CD8-positive, alpha-beta memory T cell (primary cell): ENCODE measurements at regions of chr13 and their contacts with region 1.

Region 1: DNA sequence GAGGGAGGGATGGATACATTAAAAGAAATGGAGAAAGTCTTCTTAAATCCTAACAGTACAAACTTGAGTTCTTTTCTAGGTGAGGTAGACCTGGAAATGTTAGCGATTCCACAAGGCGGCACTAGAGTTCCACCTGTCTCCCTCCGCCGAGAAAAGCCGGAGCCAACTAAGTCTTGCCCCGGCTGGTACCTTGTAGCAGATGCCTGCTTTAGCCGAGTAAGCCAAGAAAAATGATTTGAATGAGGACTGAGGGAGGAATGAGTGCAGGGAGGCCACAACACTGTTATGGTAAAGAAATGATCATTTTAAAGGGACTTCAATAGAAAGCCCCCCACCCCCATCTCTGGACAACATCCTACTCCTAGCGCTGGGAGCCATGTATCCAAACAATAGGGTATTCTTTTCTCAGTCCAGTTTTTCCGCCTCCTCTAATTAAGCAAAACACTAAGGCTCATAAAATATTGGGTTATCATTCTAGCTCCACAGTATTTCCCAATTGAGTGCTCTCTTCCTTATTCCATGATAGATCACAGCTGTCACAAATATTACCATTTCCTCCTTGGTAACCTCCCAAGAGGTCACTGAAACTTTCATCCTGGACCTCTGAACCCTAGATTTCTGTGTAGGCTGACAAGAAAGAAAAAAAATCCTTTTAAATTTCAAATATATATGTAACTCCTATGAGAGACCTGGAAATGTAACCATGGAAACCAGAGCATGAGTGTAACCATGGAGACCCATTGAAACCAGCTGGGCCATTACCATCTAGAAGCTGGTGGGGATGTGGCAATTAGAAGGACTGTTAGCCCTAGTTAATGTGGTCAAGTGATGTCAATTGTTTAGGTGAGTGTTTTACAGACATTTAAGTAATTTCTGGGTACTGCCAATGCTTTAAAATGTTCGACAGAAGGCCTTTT is 58.3 kb downstream of the GPALPP1 start:
- DNase-seq: peak; percentile 56 to 82 (median 65)
- H3K4me3 ChIP-seq: peak overlapping the region; percentile 16
- H3K4me3 Mint-ChIP-seq: peak overlapping the region; percentile 31 to 75 (median 73)
- H3K27ac ChIP-seq: no peak overlapping the region
- H3K27ac Mint-ChIP-seq: peak overlapping the region in 2 of 8 donors; percentile 2 to 33
- H3K4me1 ChIP-seq: no peaks in the 10 kb centered on the region
- H3K4me1 Mint-ChIP-seq: peaks cover 5 to 12% (median 7%) of the 10 kb centered on the region in 3 donors
- H3K27me3 ChIP-seq: no peaks in the 10 kb centered on the region
- H3K27me3 Mint-ChIP-seq: peaks cover 2 to 12% of the 10 kb centered on the region in 2 donors

Region 2: GRCh38 chr13:44934724-44935123 is 112.9 kb before region 1 on chr13:
- CTCF ChIA-PET with region 1: no interaction called
- POLR2A ChIA-PET with region 1: no interaction called
- DNase-seq: no peak
- H3K4me3 ChIP-seq: no peak overlapping the region
- H3K4me3 Mint-ChIP-seq: no peak overlapping the region
- H3K27ac ChIP-seq: no peak overlapping the region
- H3K27ac Mint-ChIP-seq: no peak overlapping the region
- H3K4me1 ChIP-seq: no peaks in the 10 kb centered on the region
- H3K4me1 Mint-ChIP-seq: no peaks in the 10 kb centered on the region
- H3K27me3 ChIP-seq: no peaks in the 10 kb centered on the region
- H3K27me3 Mint-ChIP-seq: peaks cover 4 to 13% of the 10 kb centered on the region in 2 donors

Region 3: DNA sequence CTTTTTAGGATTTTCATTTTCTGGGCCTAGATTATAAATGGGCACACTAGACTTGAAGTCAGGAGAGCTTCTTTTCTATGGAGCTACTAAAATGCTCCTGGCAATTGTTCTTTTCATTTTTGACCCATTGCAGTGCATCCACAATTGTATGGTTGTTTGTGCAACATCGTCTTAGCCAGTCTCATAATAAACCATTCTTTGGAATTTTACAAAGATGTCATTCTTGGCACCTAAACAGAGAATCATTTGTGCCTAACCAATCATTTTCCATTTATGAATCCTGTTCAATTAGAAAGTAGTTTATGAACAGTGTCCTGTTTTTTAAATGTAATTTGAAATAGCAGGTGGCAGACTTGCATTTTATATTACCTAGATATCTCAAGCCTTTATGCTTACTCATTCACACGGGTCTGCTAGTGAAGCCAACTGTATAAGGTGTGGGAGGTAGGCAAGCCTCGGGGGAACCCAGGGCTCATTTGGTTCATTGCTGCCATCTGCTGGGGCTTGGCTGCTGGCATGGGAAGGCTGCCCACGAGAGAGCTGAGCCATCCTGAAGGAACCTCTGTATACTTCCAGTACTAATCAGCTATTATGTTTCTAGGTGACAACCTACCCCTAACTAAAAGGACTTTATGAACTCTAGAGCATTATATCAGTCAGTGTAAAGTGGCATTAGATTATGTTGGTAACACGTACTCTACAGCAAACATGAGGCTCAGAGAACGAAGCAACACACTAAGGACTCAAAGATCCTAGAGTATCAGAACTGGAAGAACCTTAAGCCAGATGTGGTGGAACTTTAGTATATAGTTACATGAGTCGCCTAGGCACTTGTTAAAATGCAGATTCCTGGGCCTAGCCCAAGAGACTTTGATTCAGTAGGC is 233.3 kb after region 1 on chr13:
- CTCF ChIA-PET with region 1: interaction called, 12 read pairs
- POLR2A ChIA-PET with region 1: no interaction called
- DNase-seq: peak in 1 of 5 donors; percentile 9
- H3K4me3 ChIP-seq: no peak overlapping the region
- H3K4me3 Mint-ChIP-seq: no peak overlapping the region
- H3K27ac ChIP-seq: no peak overlapping the region
- H3K27ac Mint-ChIP-seq: peak overlapping the region in 3 of 8 donors; percentile 22 to 61 (median 47)
- H3K4me1 ChIP-seq: no peaks in the 10 kb centered on the region
- H3K4me1 Mint-ChIP-seq: no peaks in the 10 kb centered on the region
- H3K27me3 ChIP-seq: no peaks in the 10 kb centered on the region
- H3K27me3 Mint-ChIP-seq: no peaks in the 10 kb centered on the region

Region 4: DNA sequence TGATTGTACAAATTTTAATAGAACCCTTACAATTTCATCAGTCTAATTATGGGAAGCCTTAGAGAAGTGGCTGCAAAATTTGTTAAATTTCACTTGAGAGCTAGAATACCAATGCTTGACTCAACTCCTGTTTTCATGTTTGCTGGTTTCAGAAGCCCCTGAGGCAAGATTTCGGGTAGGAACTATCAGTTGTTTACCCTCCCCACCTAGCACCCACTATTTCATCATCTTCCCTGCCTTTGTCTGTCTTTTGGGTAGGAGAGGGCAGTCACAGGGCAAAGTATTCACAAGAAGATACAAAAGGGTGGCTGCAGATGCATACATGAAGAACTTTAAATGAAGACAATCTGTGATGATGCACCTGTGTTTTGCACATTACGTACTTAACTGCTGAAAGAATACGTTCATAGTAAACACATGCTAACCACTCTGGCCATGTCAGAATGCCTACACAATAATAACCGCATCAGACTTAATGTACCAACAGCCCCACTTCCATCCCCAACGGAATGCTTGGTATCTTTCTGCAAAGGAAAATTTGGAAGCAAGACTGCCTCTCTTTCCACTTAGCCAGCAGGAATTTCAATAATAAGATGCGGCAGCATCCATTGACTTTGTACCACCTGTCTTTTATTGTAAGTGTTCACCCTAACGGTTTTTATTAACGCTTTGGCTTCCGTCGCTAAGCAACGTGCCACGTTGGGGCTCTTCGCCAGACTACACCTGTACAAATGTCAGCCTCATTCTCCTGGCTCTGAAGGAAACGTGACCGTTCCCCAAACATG is 262.9 kb after region 1 on chr13:
- CTCF ChIA-PET with region 1: interaction called, 70 read pairs
- POLR2A ChIA-PET with region 1: no interaction called
- DNase-seq: no peak
- H3K4me3 ChIP-seq: peak overlapping the region; percentile 23
- H3K4me3 Mint-ChIP-seq: peak overlapping the region; percentile 85 to 94 (median 88)
- H3K27ac ChIP-seq: no peak overlapping the region
- H3K27ac Mint-ChIP-seq: peak overlapping the region in 2 of 8 donors; percentile 18 to 79
- H3K4me1 ChIP-seq: peaks cover 13% of the 10 kb centered on the region
- H3K4me1 Mint-ChIP-seq: peaks cover 11 to 24% (median 20%) of the 10 kb centered on the region in 3 donors
- H3K27me3 ChIP-seq: no peaks in the 10 kb centered on the region
- H3K27me3 Mint-ChIP-seq: peaks cover 12 to 25% of the 10 kb centered on the region in 2 donors

Region 5: GRCh38 chr13:45393941-45394570 is 346.4 kb after region 1 on chr13:
- CTCF ChIA-PET with region 1: interaction called, 14 read pairs
- POLR2A ChIA-PET with region 1: no interaction called
- DNase-seq: peak in 1 of 5 donors; percentile 15
- H3K4me3 ChIP-seq: no peak overlapping the region
- H3K4me3 Mint-ChIP-seq: no peak overlapping the region
- H3K27ac ChIP-seq: no peak overlapping the region
- H3K27ac Mint-ChIP-seq: peak overlapping the region in 4 of 8 donors; percentile 33 to 68 (median 48)
- H3K4me1 ChIP-seq: peaks cover 30% of the 10 kb centered on the region
- H3K4me1 Mint-ChIP-seq: peaks cover 39 to 48% (median 47%) of the 10 kb centered on the region in 3 donors
- H3K27me3 ChIP-seq: no peaks in the 10 kb centered on the region
- H3K27me3 Mint-ChIP-seq: no peaks in the 10 kb centered on the region